ENCODE measurements at regions of chr19 and their contacts with region 1.

Region 1: GRCh38 chr19:2021453-2022140 is 6.1 kb upstream of the BTBD2 start:
- DNase-seq: no peak
- ATAC-seq: no peak
- H3K4me3 Mint-ChIP-seq: no peak overlapping the region
- H3K27ac Mint-ChIP-seq: no peak overlapping the region
- H3K4me1 Mint-ChIP-seq: peaks cover 4% of the 10 kb centered on the region
- H3K27me3 Mint-ChIP-seq: no peaks in the 10 kb centered on the region
- CTCF ChIP-seq: no peak

Region 2: GRCh38 chr19:2032296-2032941 is 10.8 kb after region 1 on chr19:
- CTCF ChIA-PET with region 1: interaction called, 14 read pairs
- POLR2A ChIA-PET with region 1: interaction called, 3 read pairs
- intact Hi-C with region 1: no loop called
- DNase-seq: peak; percentile 63
- ATAC-seq: peak; percentile 40
- H3K4me3 Mint-ChIP-seq: peak overlapping the region; percentile 65
- H3K27ac Mint-ChIP-seq: peak overlapping the region; percentile 80
- H3K4me1 Mint-ChIP-seq: peaks cover 25% of the 10 kb centered on the region
- H3K27me3 Mint-ChIP-seq: no peaks in the 10 kb centered on the region
- CTCF ChIP-seq: no peak

Region 3: GRCh38 chr19:2070436-2070827 is 48.8 kb after region 1 on chr19:
- CTCF ChIA-PET with region 1: interaction called, 25 read pairs
- POLR2A ChIA-PET with region 1: no interaction called
- intact Hi-C with region 1: loop called (anchors 5 kb)
- DNase-seq: no peak
- ATAC-seq: no peak
- H3K4me3 Mint-ChIP-seq: no peak overlapping the region
- H3K27ac Mint-ChIP-seq: no peak overlapping the region
- H3K4me1 Mint-ChIP-seq: peaks cover 8% of the 10 kb centered on the region
- H3K27me3 Mint-ChIP-seq: no peaks in the 10 kb centered on the region
- CTCF ChIP-seq: no peak

Region 4: DNA sequence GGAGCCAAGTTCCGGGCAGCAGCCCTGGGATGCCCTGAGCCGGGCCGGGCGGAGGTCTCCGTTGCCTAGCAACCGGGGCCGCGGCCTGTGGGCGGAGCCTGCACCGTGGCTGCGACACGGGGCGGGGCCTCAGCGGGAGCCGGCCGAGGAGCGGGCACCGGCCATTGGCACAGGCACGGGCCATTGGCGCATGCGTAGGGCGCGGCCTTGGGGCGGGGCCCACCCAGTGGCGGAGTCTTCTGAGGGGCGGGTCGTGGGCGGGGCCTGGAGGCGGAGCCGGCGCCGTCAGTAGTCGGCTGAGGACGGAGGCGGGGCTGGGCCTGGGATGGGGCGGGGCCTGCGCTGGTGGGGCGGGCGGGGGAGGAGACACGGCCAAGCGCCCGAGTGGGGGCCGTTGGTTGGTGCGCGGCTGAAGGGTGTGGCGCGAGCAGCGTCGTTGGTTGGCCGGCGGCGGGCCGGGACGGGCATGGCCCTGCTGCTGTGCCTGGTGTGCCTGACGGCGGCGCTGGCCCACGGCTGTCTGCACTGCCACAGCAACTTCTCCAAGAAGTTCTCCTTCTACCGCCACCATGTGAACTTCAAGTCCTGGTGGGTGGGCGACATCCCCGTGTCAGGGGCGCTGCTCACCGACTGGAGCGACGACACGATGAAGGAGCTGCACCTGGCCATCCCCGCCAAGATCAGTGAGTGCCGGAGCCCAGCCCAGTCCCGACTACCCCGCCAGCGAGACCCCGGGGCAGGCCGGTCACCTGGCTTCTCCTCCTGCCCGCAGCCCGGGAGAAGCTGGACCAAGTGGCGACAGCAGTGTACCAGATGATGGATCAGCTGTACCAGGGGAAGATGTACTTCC is 75.1 kb after region 1 on chr19 and contains the start of gene IZUMO4:
- CTCF ChIA-PET with region 1: no interaction called
- POLR2A ChIA-PET with region 1: no interaction called
- intact Hi-C with region 1: no loop called
- DNase-seq: peak; percentile 100
- ATAC-seq: peak; percentile 86
- H3K4me3 Mint-ChIP-seq: peak within 1 kb of the TSS; percentile 85
- H3K27ac Mint-ChIP-seq: peak within 1 kb of the TSS; percentile 84
- H3K4me1 Mint-ChIP-seq: peaks cover 26% of the 10 kb centered on the region
- H3K27me3 Mint-ChIP-seq: no peaks in the 10 kb centered on the region
- CTCF ChIP-seq: no peak
- total RNA-seq, gene IZUMO4: 22.6 to 23.0 TPM